Endothelial cell of umbilical vein (primary cell): ENCODE measurements at regions of chr1 and their contacts with region 1.

Region 1: GRCh38 chr1:226062558-226063223 is at the start of gene H3-3A:
- DNase-seq: peak; percentile 94
- H3K4me3 ChIP-seq: peak within 1 kb of the TSS; percentile 68 to 99 (median 90)
- H3K27ac ChIP-seq: peak within 1 kb of the TSS; percentile 95
- H3K4me1 ChIP-seq: peaks cover 24% of the 10 kb centered on the region
- H3K27me3 ChIP-seq: no peaks in the 10 kb centered on the region
- CTCF ChIP-seq: no peak
- POLR2A ChIP-seq: peak; percentile 95
- total RNA-seq, gene H3-3A: 448 and 477 TPM in 2 replicates

Region 2: DNA sequence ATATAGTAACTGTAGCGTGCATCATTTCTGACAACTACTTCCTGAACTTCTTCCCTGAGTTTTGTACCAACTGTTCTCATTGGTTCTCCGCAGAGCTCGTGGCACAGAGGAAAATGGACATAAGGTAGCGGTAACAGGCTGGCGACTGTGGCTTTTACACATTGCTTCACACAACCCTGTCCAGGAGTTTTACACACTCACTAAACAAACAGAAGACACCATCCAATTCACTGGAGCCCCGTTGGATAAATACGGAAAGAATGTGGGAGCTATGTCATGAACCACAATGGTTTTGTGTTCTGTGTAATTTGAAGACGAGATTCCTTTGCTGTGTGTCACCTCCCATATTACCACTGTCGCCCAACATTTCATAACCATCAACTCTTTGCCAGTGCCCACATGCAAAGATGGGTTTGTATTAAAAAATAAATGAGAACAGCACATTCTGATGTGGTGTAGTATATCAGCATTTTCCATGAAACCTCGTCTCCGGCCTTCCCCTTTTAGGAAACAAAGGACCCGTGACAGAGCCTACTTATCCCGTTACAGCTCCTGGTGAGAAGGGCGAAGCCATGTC is 362.4 kb before region 1 on chr1:
- CTCF ChIA-PET with region 1: no interaction called
- POLR2A ChIA-PET with region 1: no interaction called
- dilution Hi-C with region 1: no loop called
- intact Hi-C with region 1: no loop called
- DNase-seq: peak; percentile 67
- H3K4me3 ChIP-seq: no peak overlapping the region
- H3K27ac ChIP-seq: peak overlapping the region; percentile 58
- H3K4me1 ChIP-seq: peaks cover 20% of the 10 kb centered on the region
- H3K27me3 ChIP-seq: no peaks in the 10 kb centered on the region
- CTCF ChIP-seq: no peak
- POLR2A ChIP-seq: no peak

Region 3: DNA sequence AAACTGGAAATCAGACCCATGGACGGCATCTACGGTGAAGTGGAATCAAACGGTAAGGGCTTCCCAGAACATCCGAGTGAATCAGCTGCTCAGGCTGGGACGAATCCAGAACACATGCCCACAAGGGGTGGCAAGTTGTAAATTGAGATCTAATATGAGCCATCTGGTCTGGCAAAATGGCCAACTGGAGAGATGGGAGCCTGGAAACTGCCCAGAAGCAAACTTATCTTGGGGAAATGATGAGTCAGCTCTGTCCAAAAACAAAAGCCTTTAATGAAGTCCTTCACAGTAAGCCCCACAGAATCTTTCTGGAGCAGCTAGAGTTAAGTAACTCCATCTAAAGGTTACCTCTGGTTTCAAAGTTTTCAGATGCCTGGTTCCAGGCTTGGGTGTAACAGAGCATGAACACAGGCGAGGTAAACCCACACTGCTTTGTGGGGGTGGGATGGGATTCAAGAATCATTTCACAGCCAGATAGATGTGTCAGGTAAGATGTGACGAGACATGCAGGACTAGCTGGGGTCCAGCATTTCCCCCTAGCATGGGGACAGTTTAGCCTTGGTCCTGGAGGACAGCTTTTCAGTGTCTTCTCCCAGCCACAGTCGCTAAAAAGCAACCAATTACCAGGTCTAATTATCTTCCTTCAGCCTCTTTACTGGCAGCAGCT is 295.6 kb before region 1 on chr1:
- CTCF ChIA-PET with region 1: no interaction called
- POLR2A ChIA-PET with region 1: no interaction called
- dilution Hi-C with region 1: no loop called
- intact Hi-C with region 1: loop called (anchors 5 kb)
- DNase-seq: peak; percentile 84
- H3K4me3 ChIP-seq: no peak overlapping the region
- H3K27ac ChIP-seq: peak overlapping the region; percentile 58
- H3K4me1 ChIP-seq: peaks cover 47% of the 10 kb centered on the region
- H3K27me3 ChIP-seq: no peaks in the 10 kb centered on the region
- CTCF ChIP-seq: no peak
- POLR2A ChIP-seq: no peak

Region 4: DNA sequence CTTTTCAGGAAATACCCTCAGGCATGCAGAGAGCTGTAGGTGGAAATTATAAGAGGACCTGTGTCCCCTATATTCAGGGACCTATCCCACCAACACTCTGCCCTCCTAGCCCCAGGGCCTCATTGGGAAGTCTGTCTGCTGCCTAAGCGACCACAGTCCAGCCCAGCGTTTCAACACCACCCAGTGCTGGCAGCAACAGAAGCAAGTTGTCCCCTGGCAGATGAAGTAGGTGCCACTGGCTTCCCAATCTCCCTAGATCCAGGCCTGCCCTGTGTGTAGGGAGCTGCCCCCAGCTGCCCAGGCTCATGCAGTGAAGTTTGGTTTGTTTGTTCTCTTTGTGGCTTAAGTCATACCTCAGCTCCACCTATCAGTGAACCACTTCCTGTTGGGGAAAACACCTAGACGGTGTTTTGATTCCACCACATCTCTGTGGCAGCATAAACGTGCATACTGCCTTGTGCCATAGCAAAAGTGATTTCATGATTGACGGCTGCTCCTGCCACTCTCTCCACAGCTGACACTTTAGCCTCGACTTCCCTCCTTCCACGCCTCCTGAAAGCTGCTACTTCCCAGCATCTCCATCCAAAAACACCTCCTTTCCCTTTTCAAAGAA is 165.6 kb before region 1 on chr1:
- CTCF ChIA-PET with region 1: no interaction called
- POLR2A ChIA-PET with region 1: no interaction called
- dilution Hi-C with region 1: no loop called
- intact Hi-C with region 1: no loop called
- DNase-seq: no peak
- H3K4me3 ChIP-seq: no peak overlapping the region
- H3K27ac ChIP-seq: no peak overlapping the region
- H3K4me1 ChIP-seq: peaks cover 7% of the 10 kb centered on the region
- H3K27me3 ChIP-seq: no peaks in the 10 kb centered on the region
- CTCF ChIP-seq: no peak
- POLR2A ChIP-seq: no peak

Region 5: DNA sequence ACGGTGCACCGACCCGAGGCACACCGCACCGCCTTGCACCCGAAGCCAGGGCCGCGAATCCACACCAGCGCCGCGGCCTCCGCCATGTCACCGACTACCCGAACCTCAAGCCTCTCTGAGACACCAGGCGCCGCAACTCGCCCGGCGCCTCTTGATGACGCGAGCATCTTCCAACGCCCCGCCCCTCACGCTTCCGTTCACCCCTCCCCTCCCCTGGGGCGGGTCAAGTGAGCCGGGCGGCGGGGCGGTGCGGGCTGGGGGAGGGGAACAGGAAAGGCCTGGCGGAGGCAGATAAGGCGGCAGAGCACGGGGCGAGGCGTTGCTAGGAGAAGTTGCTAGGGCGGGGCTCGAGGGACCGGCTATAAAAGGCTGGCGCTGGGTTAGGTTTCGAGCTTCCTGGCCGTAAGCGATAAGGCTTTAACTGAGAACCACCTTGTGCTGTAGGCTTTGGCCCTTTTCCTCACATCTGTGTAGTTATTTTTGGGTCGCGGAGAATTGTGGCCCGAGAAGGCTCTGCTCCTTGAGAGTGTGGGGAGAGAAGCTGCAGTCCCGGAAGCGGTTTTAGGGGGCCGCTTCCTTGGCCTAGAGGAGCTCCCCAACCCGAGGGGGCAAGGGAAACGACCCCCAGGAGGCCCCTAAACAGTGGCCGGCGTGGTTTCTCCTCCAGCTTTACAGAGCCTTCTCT is 63.3 kb before region 1 on chr1 and contains the start of gene SDE2:
- CTCF ChIA-PET with region 1: interaction called, 27 read pairs
- POLR2A ChIA-PET with region 1: interaction called, 29 read pairs
- dilution Hi-C with region 1: no loop called
- intact Hi-C with region 1: loop called (anchors 1 kb)
- DNase-seq: peak; percentile 100
- H3K4me3 ChIP-seq: peak within 1 kb of the TSS; percentile 75 to 97 (median 90)
- H3K27ac ChIP-seq: peak within 1 kb of the TSS; percentile 96
- H3K4me1 ChIP-seq: peaks cover 52% of the 10 kb centered on the region
- H3K27me3 ChIP-seq: no peaks in the 10 kb centered on the region
- CTCF ChIP-seq: no peak
- POLR2A ChIP-seq: peak; percentile 98
- total RNA-seq, gene SDE2: 15.9 and 16.1 TPM in 2 replicates

Region 6: GRCh38 chr1:226051356-226051755 is 11.3 kb before region 1 on chr1:
- CTCF ChIA-PET with region 1: interaction called, 14 read pairs
- POLR2A ChIA-PET with region 1: interaction called, 6 read pairs
- dilution Hi-C with region 1: no loop called
- intact Hi-C with region 1: no loop called
- DNase-seq: no peak
- H3K4me3 ChIP-seq: no peak overlapping the region
- H3K27ac ChIP-seq: no peak overlapping the region
- H3K4me1 ChIP-seq: no peaks in the 10 kb centered on the region
- H3K27me3 ChIP-seq: peaks cover 6 to 12% of the 10 kb centered on the region in 2 experiments
- CTCF ChIP-seq: no peak
- POLR2A ChIP-seq: no peak

Region 7: GRCh38 chr1:226100436-226101391 is 38.0 kb after region 1 on chr1:
- CTCF ChIA-PET with region 1: interaction called, 43 read pairs
- POLR2A ChIA-PET with region 1: interaction called, 4 read pairs
- dilution Hi-C with region 1: no loop called
- intact Hi-C with region 1: no loop called
- DNase-seq: peak; percentile 61
- H3K4me3 ChIP-seq: peak overlapping the region; percentile 36 to 81 (median 80)
- H3K27ac ChIP-seq: no peak overlapping the region
- H3K4me1 ChIP-seq: peaks cover 10% of the 10 kb centered on the region
- H3K27me3 ChIP-seq: peaks cover 2 to 8% of the 10 kb centered on the region in 2 experiments
- CTCF ChIP-seq: no peak
- POLR2A ChIP-seq: no peak

Region 8: GRCh38 chr1:226186124-226187018 is 123.7 kb after region 1 on chr1 and contains the start of gene ACBD3:
- CTCF ChIA-PET with region 1: interaction called, 3 read pairs
- POLR2A ChIA-PET with region 1: interaction called, 3 read pairs
- dilution Hi-C with region 1: no loop called
- intact Hi-C with region 1: loop called (anchors 5 kb)
- DNase-seq: peak; percentile 82
- H3K4me3 ChIP-seq: peak within 1 kb of the TSS; percentile 68 to 93 (median 70)
- H3K27ac ChIP-seq: peak within 1 kb of the TSS; percentile 66
- H3K4me1 ChIP-seq: peaks cover 12% of the 10 kb centered on the region
- H3K27me3 ChIP-seq: no peaks in the 10 kb centered on the region
- CTCF ChIP-seq: peak in 1 of 2 donors; percentile 8
- POLR2A ChIP-seq: peak; percentile 84
- total RNA-seq, gene ACBD3: 36.4 and 37.0 TPM in 2 replicates

Region 9: GRCh38 chr1:226940029-226940805 is 877.5 kb after region 1 on chr1 and contains the start of gene COQ8A:
- CTCF ChIA-PET with region 1: no interaction called
- POLR2A ChIA-PET with region 1: no interaction called
- dilution Hi-C with region 1: no loop called
- intact Hi-C with region 1: no loop called
- DNase-seq: peak; percentile 99
- H3K4me3 ChIP-seq: peak within 1 kb of the TSS; percentile 40 to 63 (median 54)
- H3K27ac ChIP-seq: peak within 1 kb of the TSS; percentile 46
- H3K4me1 ChIP-seq: peaks cover 7% of the 10 kb centered on the region
- H3K27me3 ChIP-seq: no peaks in the 10 kb centered on the region
- CTCF ChIP-seq: no peak
- POLR2A ChIP-seq: no peak
- total RNA-seq, gene COQ8A: 7.3 and 9.4 TPM in 2 replicates